AG04450 (cell line): ENCODE measurements at regions of chr3 and their contacts with region 1.

Region 1: DNA sequence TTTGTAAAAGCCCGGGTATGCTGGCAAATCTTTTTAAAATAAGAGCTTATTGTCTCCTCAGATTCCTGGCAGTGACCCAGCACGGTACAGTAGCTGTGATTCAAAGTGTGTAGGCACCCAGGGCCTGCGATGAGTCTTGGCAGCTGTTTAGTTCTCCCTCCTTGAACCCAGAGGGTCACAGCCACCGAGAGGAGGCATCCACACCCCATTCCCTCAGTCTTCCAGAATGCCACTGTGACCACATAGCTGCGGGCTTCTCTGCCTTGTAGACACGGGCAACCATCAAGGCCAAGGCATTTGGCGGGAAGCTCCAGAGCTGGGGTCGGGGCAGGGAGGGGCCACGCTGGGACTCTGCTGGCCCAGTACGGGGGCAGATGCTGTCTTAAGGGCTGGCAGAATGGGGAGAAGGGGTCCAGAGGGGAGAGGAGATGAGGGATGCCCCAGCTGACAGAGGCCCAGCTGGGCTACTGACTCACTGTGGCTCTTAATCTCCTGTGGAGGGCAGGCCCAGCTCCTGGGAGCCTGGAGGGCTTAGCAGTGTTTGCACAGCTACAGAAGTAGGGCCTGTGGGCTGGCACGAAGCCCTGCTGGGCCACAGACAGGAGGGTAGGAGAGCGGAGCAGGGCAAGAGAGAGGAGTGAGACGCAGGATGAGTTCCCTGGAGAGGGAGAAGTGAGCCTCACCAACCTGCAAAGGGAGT is 68.8 kb upstream of the DLG1 start:
- DNase-seq: peak; percentile 53
- H3K4me3 ChIP-seq: no peak overlapping the region
- H3K27ac ChIP-seq: peak overlapping the region; percentile 52
- H3K27me3 ChIP-seq: peaks cover 2% of the 10 kb centered on the region
- CTCF ChIP-seq: no peak

Region 2: GRCh38 chr3:197354319-197355001 is 12.8 kb before region 1 on chr3:
- CTCF ChIA-PET with region 1: interaction called, 4 read pairs
- POLR2A ChIA-PET with region 1: interaction called, 14 read pairs
- DNase-seq: peak; percentile 49
- H3K4me3 ChIP-seq: peak overlapping the region; percentile 38
- H3K27ac ChIP-seq: peak overlapping the region; percentile 21
- H3K27me3 ChIP-seq: peaks cover 3% of the 10 kb centered on the region
- CTCF ChIP-seq: no peak

Region 3: GRCh38 chr3:197380786-197381185 is 13.6 kb after region 1 on chr3:
- CTCF ChIA-PET with region 1: no interaction called
- POLR2A ChIA-PET with region 1: interaction called, 13 read pairs
- DNase-seq: no peak
- H3K4me3 ChIP-seq: no peak overlapping the region
- H3K27ac ChIP-seq: no peak overlapping the region
- H3K27me3 ChIP-seq: peaks cover 17% of the 10 kb centered on the region
- CTCF ChIP-seq: no peak